Posterior vena cava (tissue), 2 donors: ENCODE measurements at regions of chr4 and their contacts with region 1.

Region 1: GRCh38 chr4:56799824-56800756 is 21.4 kb downstream of the SPINK2 start:
- DNase-seq: peak; percentile 95

Region 2: GRCh38 chr4:56570041-56570440 is 230.0 kb before region 1 on chr4:
- intact Hi-C with region 1: loop called in 1 of 2 experiments (anchors 5 kb)
- DNase-seq: no peak

Region 3: GRCh38 chr4:56999751-57000150 is 199.7 kb after region 1 on chr4:
- intact Hi-C with region 1: no loop called
- DNase-seq: no peak